ENCODE measurements at regions of chr14 and their contacts with region 1.

Region 1: GRCh38 chr14:66496188-66496807 is 10.1 kb downstream of the CCDC196 start:
- DNase-seq: no peak
- H3K4me3 ChIP-seq: no peak overlapping the region
- H3K27ac ChIP-seq: no peak overlapping the region
- H3K27me3 ChIP-seq: peaks cover 2% of the 10 kb centered on the region
- CTCF ChIP-seq: no peak

Region 2: GRCh38 chr14:66507722-66508546 is 11.6 kb after region 1 on chr14 and contains the start of gene GPHN:
- CTCF ChIA-PET with region 1: interaction called, 23 read pairs
- POLR2A ChIA-PET with region 1: interaction called, 5 read pairs
- DNase-seq: peak; percentile 95
- H3K4me3 ChIP-seq: peak within 1 kb of the TSS; percentile 94
- H3K27ac ChIP-seq: peak within 1 kb of the TSS; percentile 84
- H3K27me3 ChIP-seq: no peaks in the 10 kb centered on the region
- CTCF ChIP-seq: peak; percentile 40; the same call in 1 of the 2 replicates
- polyA plus RNA-seq, gene GPHN: 7.4 and 7.7 TPM in 2 replicates

Region 3: GRCh38 chr14:66530526-66530925 is 34.2 kb after region 1 on chr14:
- CTCF ChIA-PET with region 1: no interaction called
- POLR2A ChIA-PET with region 1: no interaction called
- DNase-seq: no peak
- H3K4me3 ChIP-seq: no peak overlapping the region
- H3K27ac ChIP-seq: no peak overlapping the region
- H3K27me3 ChIP-seq: no peaks in the 10 kb centered on the region
- CTCF ChIP-seq: no peak

Region 4: DNA sequence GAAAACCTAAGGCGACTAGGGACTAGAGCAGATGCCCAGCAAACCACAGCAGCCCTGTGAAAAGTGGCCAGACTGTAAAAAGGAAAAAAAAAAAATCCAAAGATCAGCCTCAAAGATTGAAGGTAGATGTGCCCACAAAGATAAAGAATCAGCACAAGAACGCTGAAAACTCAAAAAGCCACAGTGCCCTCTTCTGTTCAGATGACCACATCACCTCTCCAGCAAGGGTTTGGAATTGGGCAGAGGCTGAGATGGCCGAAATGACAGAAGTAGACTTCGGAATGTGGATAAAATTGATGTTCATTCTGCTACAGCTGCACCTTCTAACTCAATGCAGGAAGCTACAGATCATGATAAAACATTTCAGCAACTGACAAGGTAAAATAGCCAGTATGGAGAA is 166.1 kb after region 1 on chr14:
- CTCF ChIA-PET with region 1: interaction called, 19 read pairs
- POLR2A ChIA-PET with region 1: no interaction called
- DNase-seq: no peak
- H3K4me3 ChIP-seq: no peak overlapping the region
- H3K27ac ChIP-seq: no peak overlapping the region
- H3K27me3 ChIP-seq: no peaks in the 10 kb centered on the region
- CTCF ChIP-seq: peak; percentile 56

Region 5: GRCh38 chr14:66758031-66758613 is 261.8 kb after region 1 on chr14:
- CTCF ChIA-PET with region 1: no interaction called
- POLR2A ChIA-PET with region 1: no interaction called
- DNase-seq: no peak
- H3K4me3 ChIP-seq: no peak overlapping the region
- H3K27ac ChIP-seq: no peak overlapping the region
- H3K27me3 ChIP-seq: no peaks in the 10 kb centered on the region
- CTCF ChIP-seq: no peak

Measured in AG04450 (cell line).